CD8-positive, alpha-beta T cell (primary cell): ENCODE measurements at regions of chr1 and their contacts with region 1.

Region 1: GRCh38 chr1:244628789-244629188 is 24.1 kb upstream of the DESI2 start:
- DNase-seq: no peak
- ATAC-seq: no peak
- H3K4me3 ChIP-seq: no peak overlapping the region
- H3K4me3 Mint-ChIP-seq: no peak overlapping the region
- H3K27ac ChIP-seq: no peak overlapping the region
- H3K27ac Mint-ChIP-seq: no peak overlapping the region
- H3K4me1 ChIP-seq: no peaks in the 10 kb centered on the region
- H3K4me1 Mint-ChIP-seq: no peaks in the 10 kb centered on the region
- H3K27me3 ChIP-seq: no peaks in the 10 kb centered on the region
- H3K27me3 Mint-ChIP-seq: peaks cover 14% of the 10 kb centered on the region
- CTCF ChIP-seq: no peak

Region 2: GRCh38 chr1:244302889-244303613 is 325.7 kb before region 1 on chr1:
- CTCF ChIA-PET with region 1: no interaction called
- POLR2A ChIA-PET with region 1: no interaction called
- intact Hi-C with region 1: no loop called
- DNase-seq: no peak
- ATAC-seq: no peak
- H3K4me3 ChIP-seq: no peak overlapping the region
- H3K4me3 Mint-ChIP-seq: no peak overlapping the region
- H3K27ac ChIP-seq: no peak overlapping the region
- H3K27ac Mint-ChIP-seq: no peak overlapping the region
- H3K4me1 ChIP-seq: peaks cover 4% of the 10 kb centered on the region
- H3K4me1 Mint-ChIP-seq: peaks cover 8% of the 10 kb centered on the region
- H3K27me3 ChIP-seq: no peaks in the 10 kb centered on the region
- H3K27me3 Mint-ChIP-seq: no peaks in the 10 kb centered on the region
- CTCF ChIP-seq: no peak

Region 3: DNA sequence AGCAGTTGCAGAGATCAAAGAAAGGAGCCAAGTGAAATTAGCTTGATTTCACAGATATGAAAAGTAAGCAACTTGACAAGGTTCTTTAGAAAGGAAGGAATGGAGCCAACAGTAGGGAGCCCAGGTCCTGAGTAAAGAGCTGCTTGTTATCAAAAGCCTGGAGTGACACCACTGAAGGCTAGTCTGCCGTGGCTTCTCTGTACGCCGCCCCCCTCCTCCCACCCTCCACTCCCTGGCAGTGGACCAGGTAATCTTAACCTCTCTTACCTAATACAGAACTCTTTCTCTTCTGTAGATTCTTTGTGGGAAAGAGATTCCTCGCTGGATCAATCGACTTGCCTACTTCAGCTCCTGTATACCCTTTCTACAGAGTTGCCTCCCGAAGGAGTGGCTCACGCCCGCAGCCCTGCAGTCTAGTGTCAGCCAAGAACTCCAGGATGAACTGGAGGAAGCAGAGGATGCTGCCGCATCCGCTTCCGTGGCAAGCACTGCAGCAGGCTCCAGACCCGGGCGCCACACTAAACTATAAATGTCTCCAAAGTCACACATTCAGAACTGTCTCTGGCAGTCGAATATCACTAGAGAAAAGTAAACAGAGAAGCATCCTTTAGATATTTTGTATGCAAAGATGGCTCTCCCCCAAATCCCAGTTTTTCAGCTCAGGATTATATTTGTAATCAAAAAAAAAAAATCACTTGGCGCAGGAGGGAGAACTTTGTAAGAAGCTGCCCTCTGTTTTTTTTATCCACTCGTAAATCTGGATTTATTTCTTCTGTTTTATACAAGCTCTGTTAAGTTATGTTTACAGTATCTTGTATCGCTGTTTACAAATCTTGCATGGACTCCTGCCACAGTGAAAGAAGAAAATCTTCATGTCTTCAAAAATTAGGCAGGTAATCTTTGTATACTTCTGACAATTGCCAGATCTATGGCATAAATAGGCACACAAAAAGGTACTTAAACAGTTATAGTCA is 76.8 kb after region 1 on chr1:
- CTCF ChIA-PET with region 1: no interaction called
- POLR2A ChIA-PET with region 1: no interaction called
- intact Hi-C with region 1: loop called in 1 of 2 experiments (anchors 10 kb)
- DNase-seq: no peak
- ATAC-seq: no peak
- H3K4me3 ChIP-seq: no peak overlapping the region
- H3K4me3 Mint-ChIP-seq: no peak overlapping the region
- H3K27ac ChIP-seq: no peak overlapping the region
- H3K27ac Mint-ChIP-seq: no peak overlapping the region
- H3K4me1 ChIP-seq: no peaks in the 10 kb centered on the region
- H3K4me1 Mint-ChIP-seq: no peaks in the 10 kb centered on the region
- H3K27me3 ChIP-seq: no peaks in the 10 kb centered on the region
- H3K27me3 Mint-ChIP-seq: no peaks in the 10 kb centered on the region
- CTCF ChIP-seq: no peak

Region 4: DNA sequence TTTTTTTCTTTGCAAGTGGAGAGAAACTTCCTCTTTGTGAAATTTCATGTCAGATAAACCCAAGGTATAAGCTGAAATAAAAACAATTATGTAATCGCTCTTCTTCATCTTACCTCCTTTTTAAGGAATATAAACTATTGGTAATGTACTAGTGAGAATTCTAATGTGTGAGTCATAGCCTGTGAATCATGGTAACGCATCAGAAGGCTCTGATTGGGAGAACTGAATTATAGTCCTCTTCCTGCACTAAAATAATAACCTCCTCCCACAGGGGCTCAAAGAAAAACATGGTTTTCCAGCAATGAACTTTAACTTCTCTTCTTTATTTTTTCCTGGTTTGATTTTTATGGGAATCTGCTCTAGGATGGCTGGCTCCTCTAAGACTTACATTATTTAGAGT is 149.6 kb after region 1 on chr1:
- CTCF ChIA-PET with region 1: no interaction called
- POLR2A ChIA-PET with region 1: no interaction called
- intact Hi-C with region 1: no loop called
- DNase-seq: no peak
- ATAC-seq: no peak
- H3K4me3 ChIP-seq: no peak overlapping the region
- H3K4me3 Mint-ChIP-seq: no peak overlapping the region
- H3K27ac ChIP-seq: no peak overlapping the region
- H3K27ac Mint-ChIP-seq: no peak overlapping the region
- H3K4me1 ChIP-seq: no peaks in the 10 kb centered on the region
- H3K4me1 Mint-ChIP-seq: no peaks in the 10 kb centered on the region
- H3K27me3 ChIP-seq: no peaks in the 10 kb centered on the region
- H3K27me3 Mint-ChIP-seq: peaks cover 3% of the 10 kb centered on the region
- CTCF ChIP-seq: no peak